SK-N-SH (cell line): ENCODE measurements at regions of chr12 and their contacts with region 1.

Region 1: GRCh38 chr12:49866859-49867579 is 24.1 kb upstream of the BCDIN3D start:
- DNase-seq: peak; percentile 89
- H3K4me3 ChIP-seq: no peak overlapping the region; a peak in 1 of 4 replicates
- H3K27ac ChIP-seq: no peak overlapping the region
- H3K4me1 ChIP-seq: peaks cover 32 to 52% of the 10 kb centered on the region in 2 experiments
- H3K27me3 ChIP-seq: no peaks in the 10 kb centered on the region
- CTCF ChIP-seq: peak; percentile 96
- EP300 ChIP-seq: no peak
- RAD21 ChIP-seq: peak; percentile 93

Region 2: GRCh38 chr12:49818241-49818895 is 48.7 kb before region 1 on chr12:
- CTCF ChIA-PET with region 1: no interaction called
- POLR2A ChIA-PET with region 1: no interaction called
- DNase-seq: no peak
- H3K4me3 ChIP-seq: no peak overlapping the region
- H3K27ac ChIP-seq: no peak overlapping the region
- H3K4me1 ChIP-seq: peaks cover 0 to 2% of the 10 kb centered on the region in 2 experiments; a peak in 1 of 4 replicates
- H3K27me3 ChIP-seq: no peaks in the 10 kb centered on the region
- CTCF ChIP-seq: no peak
- EP300 ChIP-seq: no peak
- RAD21 ChIP-seq: no peak

Region 3: GRCh38 chr12:49842519-49843352 is 24.3 kb before region 1 on chr12 and contains the start of gene BCDIN3D:
- CTCF ChIA-PET with region 1: interaction called, 30 read pairs
- POLR2A ChIA-PET with region 1: interaction called, 4 read pairs
- DNase-seq: peak; percentile 92
- H3K4me3 ChIP-seq: peak within 1 kb of the TSS; percentile 62 to 86
- H3K27ac ChIP-seq: peak within 1 kb of the TSS; percentile 92 to 94
- H3K4me1 ChIP-seq: peaks cover 11 to 18% of the 10 kb centered on the region in 2 experiments; a peak in 3 of 4 replicates
- H3K27me3 ChIP-seq: no peaks in the 10 kb centered on the region; the same call in 1 of the 2 replicates
- CTCF ChIP-seq: no peak
- EP300 ChIP-seq: no peak
- RAD21 ChIP-seq: no peak
- polyA plus RNA-seq, gene BCDIN3D: 2.3 and 3.8 TPM in 2 replicates

Region 4: GRCh38 chr12:49893753-49894752 is 27.0 kb after region 1 on chr12:
- CTCF ChIA-PET with region 1: interaction called, 10 read pairs
- POLR2A ChIA-PET with region 1: no interaction called
- DNase-seq: no peak
- H3K4me3 ChIP-seq: no peak overlapping the region
- H3K27ac ChIP-seq: peak overlapping the region in 1 of 2 experiments; percentile 12; a peak in 1 of 4 replicates
- H3K4me1 ChIP-seq: peaks cover 5 to 17% of the 10 kb centered on the region in 2 experiments; a peak in 1 of 4 replicates
- H3K27me3 ChIP-seq: no peaks in the 10 kb centered on the region
- CTCF ChIP-seq: no peak
- EP300 ChIP-seq: no peak
- RAD21 ChIP-seq: no peak

Region 5: DNA sequence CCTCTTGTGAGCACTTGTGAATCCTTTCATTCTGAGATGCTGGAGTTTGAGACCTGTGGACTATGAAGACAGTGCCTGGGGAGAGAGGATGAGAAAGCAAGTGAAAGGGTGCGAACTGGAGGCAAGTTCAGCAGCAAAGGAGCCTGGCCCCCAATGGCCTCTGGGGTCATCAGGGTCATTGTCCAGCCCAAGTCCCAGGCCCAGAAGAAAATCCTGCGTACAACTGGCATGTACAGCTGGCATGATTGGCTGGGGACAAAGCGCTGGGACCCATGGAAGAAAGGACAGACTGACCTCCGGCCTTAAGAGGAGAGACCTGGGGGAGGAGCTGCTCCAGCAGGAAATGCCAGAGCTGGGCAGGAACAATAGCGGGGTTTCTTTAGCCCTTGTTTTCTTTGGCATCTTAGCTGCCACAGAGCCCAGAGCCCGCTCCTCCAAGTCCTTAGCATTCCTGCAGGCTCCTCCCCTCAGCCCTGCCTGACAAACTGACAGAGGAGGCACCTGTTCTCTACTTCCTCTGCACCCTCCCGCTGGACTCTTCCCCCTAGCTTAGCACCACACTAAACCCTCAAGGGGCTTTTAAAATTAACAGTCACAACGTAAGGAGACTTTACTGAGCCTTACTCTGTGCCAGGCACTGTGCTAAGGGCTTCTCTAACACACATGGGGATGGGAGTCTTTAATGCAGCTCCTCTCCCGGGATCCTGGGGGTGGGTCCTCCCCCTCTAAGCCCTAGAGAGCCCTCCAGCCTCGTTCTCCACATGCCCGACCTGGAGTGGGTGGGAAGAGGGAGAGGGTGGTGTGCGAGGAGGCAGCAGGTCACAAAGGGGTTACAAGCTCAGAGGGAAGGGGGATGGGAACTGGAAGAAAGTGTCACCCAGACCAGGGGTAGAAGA is 92.8 kb after region 1 on chr12:
- CTCF ChIA-PET with region 1: interaction called, 312 read pairs
- POLR2A ChIA-PET with region 1: no interaction called
- DNase-seq: no peak
- H3K4me3 ChIP-seq: no peak overlapping the region
- H3K27ac ChIP-seq: 0 out of 4 replicates have a peak overlapping the region, but pooled peaks of 1 of the 2 experiments have one; percentile 18
- H3K4me1 ChIP-seq: peaks cover 3 to 19% of the 10 kb centered on the region in 2 experiments; a peak in 3 of 4 replicates
- H3K27me3 ChIP-seq: no peaks in the 10 kb centered on the region
- CTCF ChIP-seq: no peak
- EP300 ChIP-seq: 0 out of 4 replicates have a peak, but pooled peaks of 1 of the 2 experiments have one; percentile 49
- RAD21 ChIP-seq: no peak

Region 6: DNA sequence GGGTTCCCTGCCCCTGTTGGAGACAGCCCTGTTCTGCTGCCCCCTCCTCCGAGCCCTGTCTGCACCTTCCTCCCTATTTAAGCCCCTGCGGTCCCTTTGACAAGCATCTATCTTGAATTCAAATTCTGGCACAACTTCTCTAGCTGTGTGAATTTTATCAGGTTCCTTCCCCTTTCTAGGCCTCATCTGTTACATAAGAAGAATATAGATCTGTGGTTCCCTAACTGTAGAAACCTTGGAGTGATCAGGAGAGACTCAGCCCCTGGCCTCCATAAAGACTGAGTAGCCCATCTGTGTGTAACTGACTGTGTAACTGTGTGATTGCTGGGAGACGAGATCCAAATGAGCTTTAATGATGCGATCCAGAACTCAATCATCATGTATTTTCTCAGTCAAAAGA is 171.3 kb after region 1 on chr12:
- CTCF ChIA-PET with region 1: interaction called, 11 read pairs
- POLR2A ChIA-PET with region 1: no interaction called
- DNase-seq: no peak
- H3K4me3 ChIP-seq: no peak overlapping the region
- H3K27ac ChIP-seq: no peak overlapping the region
- H3K4me1 ChIP-seq: peaks cover 0 to 3% of the 10 kb centered on the region in 2 experiments; a peak in 1 of 4 replicates
- H3K27me3 ChIP-seq: no peaks in the 10 kb centered on the region
- CTCF ChIP-seq: no peak
- EP300 ChIP-seq: no peak
- RAD21 ChIP-seq: no peak